ENCODE measurements at regions of chr7 and their contacts with region 1.

Region 1: GRCh38 chr7:134778941-134779740 is at the start of gene CALD1:
- DNase-seq: peak; percentile 99
- H3K4me3 ChIP-seq: peak within 1 kb of the TSS; percentile 60 to 86 (median 78)
- H3K27ac ChIP-seq: peak within 1 kb of the TSS; percentile 88
- H3K4me1 ChIP-seq: peaks cover 37% of the 10 kb centered on the region
- H3K27me3 ChIP-seq: no peaks in the 10 kb centered on the region
- CTCF ChIP-seq: no peak
- total RNA-seq, gene CALD1: 251 to 445 TPM

Region 2: GRCh38 chr7:134394046-134394445 is 385.1 kb before region 1 on chr7:
- CTCF ChIA-PET with region 1: no interaction called
- dilution Hi-C with region 1: no loop called
- in situ Hi-C with region 1: no loop called
- intact Hi-C with region 1: no loop called
- DNase-seq: no peak
- H3K4me3 ChIP-seq: no peak overlapping the region
- H3K27ac ChIP-seq: no peak overlapping the region
- H3K4me1 ChIP-seq: peaks cover 4% of the 10 kb centered on the region
- H3K27me3 ChIP-seq: peaks cover 3% of the 10 kb centered on the region
- CTCF ChIP-seq: no peak

Region 3: DNA sequence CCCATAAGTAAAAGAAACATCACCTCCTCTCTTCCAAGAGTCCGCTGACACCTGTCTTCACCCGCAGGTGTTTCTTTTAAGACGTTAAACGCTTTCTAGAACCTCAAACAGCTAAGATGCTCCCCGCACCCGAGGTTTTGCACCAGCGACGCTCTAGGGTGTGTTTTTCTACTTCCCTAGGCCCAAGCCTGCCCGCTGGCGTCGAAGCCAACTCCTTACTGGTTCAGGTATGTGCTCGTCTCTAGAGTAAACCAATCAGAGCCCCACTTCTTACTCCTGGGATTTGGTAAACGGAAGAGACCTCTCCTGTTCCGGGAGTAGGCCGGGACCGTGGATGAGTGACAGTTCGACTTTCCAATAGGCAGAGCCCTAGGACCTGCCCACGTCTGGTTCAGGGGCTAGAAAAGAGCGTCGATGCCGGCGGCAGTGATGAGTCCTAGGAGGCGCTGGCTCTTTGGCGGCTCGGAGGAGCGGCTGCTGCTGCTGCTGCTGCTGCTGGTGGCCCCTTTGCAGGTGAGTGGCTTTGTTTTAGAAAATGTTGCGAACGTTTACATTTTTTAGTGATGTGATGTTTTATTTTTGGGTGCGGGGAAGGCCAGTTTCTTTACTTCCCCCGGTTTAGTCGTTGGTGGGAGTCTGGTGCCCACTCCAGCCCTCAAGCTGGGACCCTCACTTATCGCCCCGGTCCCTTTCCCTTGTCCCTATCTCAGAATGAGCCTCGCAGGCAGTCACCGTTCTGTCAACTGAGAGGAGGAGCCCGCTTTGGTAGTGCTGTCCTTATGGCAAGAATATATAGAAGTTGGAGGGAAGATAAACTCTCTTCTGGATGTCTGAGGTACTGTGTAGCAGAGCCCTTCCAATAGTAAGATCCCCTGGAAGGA is 132.5 kb before region 1 on chr7 and contains the start of gene BPGM:
- CTCF ChIA-PET with region 1: no interaction called
- dilution Hi-C with region 1: no loop called
- in situ Hi-C with region 1: no loop called
- intact Hi-C with region 1: loop called (anchors 5 kb)
- DNase-seq: peak; percentile 100
- H3K4me3 ChIP-seq: peak within 1 kb of the TSS; percentile 87 to 92 (median 92)
- H3K27ac ChIP-seq: peak within 1 kb of the TSS; percentile 83
- H3K4me1 ChIP-seq: peaks cover 14% of the 10 kb centered on the region
- H3K27me3 ChIP-seq: no peaks in the 10 kb centered on the region
- CTCF ChIP-seq: peak; percentile 9 to 26
- total RNA-seq, gene BPGM: 21.3 to 55.2 TPM

Region 4: GRCh38 chr7:134741907-134742635 is 37.1 kb before region 1 on chr7:
- CTCF ChIA-PET with region 1: no interaction called
- dilution Hi-C with region 1: no loop called
- in situ Hi-C with region 1: no loop called
- intact Hi-C with region 1: loop called (anchors 5 kb)
- DNase-seq: peak; percentile 55
- H3K4me3 ChIP-seq: no peak overlapping the region
- H3K27ac ChIP-seq: peak overlapping the region; percentile 70
- H3K4me1 ChIP-seq: peaks cover 35% of the 10 kb centered on the region
- H3K27me3 ChIP-seq: no peaks in the 10 kb centered on the region
- CTCF ChIP-seq: no peak

Region 5: DNA sequence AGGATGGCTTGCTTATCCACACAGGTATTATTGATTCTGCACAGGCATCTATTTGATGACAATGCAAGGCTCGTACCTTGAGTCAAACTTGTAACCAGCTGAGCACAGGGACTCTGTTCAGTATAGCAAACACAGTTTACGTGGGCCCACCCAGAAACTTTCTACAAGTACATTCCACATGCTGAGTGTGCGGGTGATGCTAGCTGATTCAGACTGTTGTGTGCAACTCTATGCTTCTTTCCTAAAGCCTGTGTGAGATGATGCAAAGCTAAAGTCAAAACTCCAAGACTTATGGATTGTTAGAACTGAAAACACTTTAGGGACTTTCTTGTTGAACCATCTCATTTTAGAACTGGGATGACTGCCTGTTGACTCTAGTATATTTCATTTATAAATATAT is 21.2 kb before region 1 on chr7:
- CTCF ChIA-PET with region 1: no interaction called
- dilution Hi-C with region 1: no loop called
- in situ Hi-C with region 1: no loop called
- intact Hi-C with region 1: no loop called
- DNase-seq: peak; percentile 20
- H3K4me3 ChIP-seq: no peak overlapping the region
- H3K27ac ChIP-seq: no peak overlapping the region
- H3K4me1 ChIP-seq: no peaks in the 10 kb centered on the region
- H3K27me3 ChIP-seq: no peaks in the 10 kb centered on the region
- CTCF ChIP-seq: no peak

Region 6: DNA sequence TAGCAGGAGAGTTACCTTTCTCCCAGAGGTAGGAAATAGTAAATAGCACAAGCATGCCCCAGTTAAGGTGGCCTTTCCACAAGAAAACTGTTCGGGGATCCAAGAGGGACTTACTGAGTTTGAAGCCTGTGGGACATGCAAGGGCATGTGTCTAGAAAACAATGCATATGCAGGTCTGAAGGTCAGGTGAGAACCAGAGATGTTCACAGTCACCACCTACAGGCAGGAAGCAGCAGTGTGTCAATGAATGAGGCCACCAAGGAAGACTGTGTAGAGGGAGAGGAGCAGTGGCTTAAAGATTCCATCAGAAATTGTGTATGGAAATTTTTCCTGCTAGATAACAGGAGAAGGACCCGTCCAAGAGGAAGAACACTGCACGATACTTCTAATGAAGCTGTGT is 66.3 kb after region 1 on chr7:
- CTCF ChIA-PET with region 1: no interaction called
- dilution Hi-C with region 1: no loop called
- in situ Hi-C with region 1: no loop called
- intact Hi-C with region 1: loop called (anchors 1 kb)
- DNase-seq: peak; percentile 73
- H3K4me3 ChIP-seq: no peak overlapping the region
- H3K27ac ChIP-seq: peak overlapping the region; percentile 59
- H3K4me1 ChIP-seq: peaks cover 26% of the 10 kb centered on the region
- H3K27me3 ChIP-seq: no peaks in the 10 kb centered on the region
- CTCF ChIP-seq: peak; percentile 81 to 84

Region 7: GRCh38 chr7:134899729-134900128 is 120.6 kb after region 1 on chr7:
- CTCF ChIA-PET with region 1: no interaction called
- dilution Hi-C with region 1: no loop called
- in situ Hi-C with region 1: no loop called
- intact Hi-C with region 1: loop called (anchors 2 kb)
- DNase-seq: peak; percentile 79
- H3K4me3 ChIP-seq: peak overlapping the region in 1 of 3 experiments; percentile 23
- H3K27ac ChIP-seq: peak overlapping the region; percentile 59
- H3K4me1 ChIP-seq: peaks cover 35% of the 10 kb centered on the region
- H3K27me3 ChIP-seq: no peaks in the 10 kb centered on the region
- CTCF ChIP-seq: no peak

Region 8: DNA sequence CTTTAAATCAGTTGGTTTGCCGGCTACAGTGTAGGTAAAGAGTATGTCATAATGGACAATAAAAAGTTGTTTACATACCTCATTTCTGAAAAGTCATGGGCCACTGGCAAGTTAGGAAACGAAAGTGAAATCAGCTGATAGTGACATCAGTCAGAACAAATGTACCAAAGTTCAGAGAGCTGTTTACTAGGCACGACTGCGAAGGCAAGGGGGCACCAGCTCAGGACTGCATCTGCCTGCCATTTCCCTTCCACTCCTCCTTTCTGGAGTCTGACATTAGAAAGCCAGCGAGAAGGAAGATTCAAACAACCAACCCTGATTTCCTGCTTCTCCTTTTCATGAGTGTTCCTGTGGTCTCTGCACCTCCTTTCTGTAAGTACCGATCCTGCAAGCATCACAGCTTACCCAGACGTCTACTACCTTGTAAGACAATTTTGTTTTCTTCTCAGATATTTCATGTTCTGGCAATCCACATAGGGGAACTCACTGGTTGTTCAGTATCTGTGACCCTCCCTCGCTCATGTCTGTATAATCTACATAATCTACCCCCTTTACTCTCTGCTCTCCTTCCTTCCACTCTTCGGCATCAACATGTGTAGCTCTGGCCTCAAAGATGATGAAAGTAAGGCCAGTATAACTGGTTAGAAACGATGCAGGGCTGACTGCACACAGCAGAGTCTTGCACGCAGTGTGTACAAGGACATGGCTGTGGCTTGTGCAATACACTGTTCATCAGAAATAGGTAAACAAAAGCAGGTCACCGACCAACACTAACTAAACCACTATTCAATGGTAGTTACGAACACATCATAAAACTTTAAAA is 369.0 kb after region 1 on chr7 and contains the start of gene TMEM140:
- CTCF ChIA-PET with region 1: no interaction called
- dilution Hi-C with region 1: no loop called
- in situ Hi-C with region 1: no loop called
- intact Hi-C with region 1: no loop called
- DNase-seq: peak; percentile 22
- H3K4me3 ChIP-seq: no peak within 1 kb of the TSS
- H3K27ac ChIP-seq: no peak within 1 kb of the TSS
- H3K4me1 ChIP-seq: no peaks in the 10 kb centered on the region
- H3K27me3 ChIP-seq: no peaks in the 10 kb centered on the region
- CTCF ChIP-seq: no peak
- total RNA-seq, gene TMEM140: 1.0 TPM in 1 of 2 donors, not detected in the other